ENCODE measurements at regions of chr17 and their contacts with region 1.

Region 1: GRCh38 chr17:39621523-39622379 is 5.0 kb upstream of the PPP1R1B start:
- DNase-seq: peak; percentile 74

Region 2: GRCh38 chr17:39064374-39064773 is 557.4 kb before region 1 on chr17:
- CTCF ChIA-PET with region 1: no interaction called
- POLR2A ChIA-PET with region 1: no interaction called
- DNase-seq: no peak

Region 3: GRCh38 chr17:39547713-39548478 is 73.9 kb before region 1 on chr17:
- CTCF ChIA-PET with region 1: interaction called, 42 read pairs
- POLR2A ChIA-PET with region 1: interaction called, 5 read pairs
- DNase-seq: peak; percentile 70

Region 4: GRCh38 chr17:39605492-39606433 is 16.0 kb before region 1 on chr17:
- CTCF ChIA-PET with region 1: interaction called, 12 read pairs
- POLR2A ChIA-PET with region 1: no interaction called
- DNase-seq: no peak

Region 5: DNA sequence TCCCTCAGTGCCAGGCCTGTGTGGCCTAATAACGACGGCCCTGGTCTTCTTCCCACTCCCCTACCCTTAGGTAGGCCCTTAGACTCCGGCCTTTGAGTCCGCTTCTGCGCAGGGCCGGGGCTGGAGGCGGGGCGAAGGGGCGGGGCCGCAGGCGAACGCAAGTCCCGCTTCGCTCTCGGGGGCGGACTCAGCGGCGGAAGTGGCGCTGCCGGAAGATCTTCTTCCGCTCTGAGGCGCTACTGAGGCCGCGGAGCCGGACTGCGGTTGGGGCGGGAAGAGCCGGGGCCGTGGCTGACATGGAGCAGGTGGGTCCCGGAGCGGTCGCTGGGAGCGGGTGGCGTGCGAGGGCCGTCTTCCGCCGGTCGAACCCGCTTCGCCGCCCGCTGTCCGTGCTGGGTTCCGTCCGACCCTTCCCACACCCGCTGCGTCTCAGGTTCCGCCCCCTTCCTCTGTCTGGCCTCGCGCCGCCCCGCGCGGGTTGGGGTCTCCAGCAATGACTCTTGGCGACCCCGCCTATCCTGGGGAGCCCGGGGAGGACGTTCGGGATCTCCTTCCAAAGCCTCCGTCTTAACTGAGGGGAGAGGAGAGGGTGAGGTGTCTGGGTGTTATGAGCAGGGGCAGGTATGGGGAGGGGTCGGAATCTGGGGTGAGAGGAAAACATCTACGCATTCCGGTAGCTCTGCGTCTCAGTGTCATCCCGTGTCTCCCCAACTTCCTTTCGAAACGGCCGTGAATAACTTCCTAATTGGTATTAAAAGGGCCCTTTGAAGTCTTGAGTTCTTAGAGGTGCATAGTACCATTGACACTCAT is 15.4 kb after region 1 on chr17 and contains the start of gene STARD3:
- CTCF ChIA-PET with region 1: interaction called, 80 read pairs
- POLR2A ChIA-PET with region 1: interaction called, 3 read pairs
- DNase-seq: peak; percentile 84

Region 6: DNA sequence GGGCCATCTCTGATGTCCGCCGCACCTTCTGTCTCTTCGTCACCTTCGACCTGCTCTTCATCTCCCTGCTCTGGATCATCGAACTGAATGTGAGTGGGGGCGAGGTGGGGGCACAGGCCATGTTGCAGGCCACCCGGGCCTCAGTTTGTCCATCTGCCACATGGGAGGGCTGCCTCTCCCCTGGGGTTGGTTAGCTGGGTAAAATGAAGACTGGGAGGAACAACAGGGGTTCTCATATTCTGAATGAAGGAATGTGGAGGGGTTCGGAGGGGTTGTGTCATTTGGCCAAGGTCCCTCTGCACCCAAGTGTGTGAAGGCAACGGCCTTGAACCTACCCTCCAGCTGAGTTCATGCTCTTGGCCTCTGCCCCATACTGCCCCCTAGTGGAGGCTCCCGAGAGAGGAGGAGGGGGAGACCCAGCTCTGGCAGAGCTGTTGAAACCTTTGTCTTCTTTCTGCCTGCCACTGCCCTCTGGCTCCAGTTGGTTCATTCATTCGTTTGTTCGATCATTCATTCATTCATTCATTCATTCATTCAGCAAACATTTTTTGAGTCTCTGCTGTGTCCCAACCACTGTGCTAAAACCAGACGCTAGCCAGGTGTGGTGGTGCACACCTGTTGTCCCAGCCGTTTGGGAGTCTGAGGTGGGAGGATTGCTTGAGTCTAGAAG is 32.0 kb after region 1 on chr17:
- CTCF ChIA-PET with region 1: interaction called, 40 read pairs
- POLR2A ChIA-PET with region 1: interaction called, 3 read pairs
- DNase-seq: peak; percentile 76

Region 7: GRCh38 chr17:39668199-39668966 is 46.6 kb after region 1 on chr17 and contains the start of gene PNMT:
- CTCF ChIA-PET with region 1: interaction called, 77 read pairs
- POLR2A ChIA-PET with region 1: no interaction called
- DNase-seq: peak; percentile 68

Region 8: GRCh38 chr17:39754161-39754951 is 132.6 kb after region 1 on chr17:
- CTCF ChIA-PET with region 1: interaction called, 11 read pairs
- POLR2A ChIA-PET with region 1: interaction called, 5 read pairs
- DNase-seq: peak; percentile 85

Measured in HEK293T (cell line).